Right cardiac atrium (tissue), 5 donors: ENCODE measurements at regions of chr18 and their contacts with region 1.

Region 1: DNA sequence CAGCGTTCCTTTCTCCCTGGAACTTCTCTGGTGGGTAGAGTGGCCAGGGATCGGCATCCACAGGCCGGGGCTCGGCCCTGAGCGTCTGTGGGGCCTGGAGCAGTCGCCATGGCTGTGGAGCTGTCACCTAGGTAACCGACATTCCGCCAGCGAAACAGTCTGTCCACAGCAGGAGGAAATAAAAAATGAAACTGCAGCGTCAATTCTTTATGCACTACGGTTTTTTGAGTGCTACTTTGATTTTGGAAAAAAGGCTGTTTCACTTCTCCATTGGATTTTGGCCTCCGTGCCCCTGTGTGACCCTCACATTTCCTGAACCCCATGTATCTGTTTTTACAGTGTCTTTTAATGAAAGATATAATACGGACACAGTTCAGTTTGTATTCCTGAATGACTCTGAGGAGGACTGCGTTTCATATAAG is 163.4 kb downstream of the LDLRAD4 start:
- DNase-seq: peak; percentile 78 to 90 (median 90)
- ATAC-seq: peak; percentile 87 to 90
- H3K4me3 ChIP-seq: peak overlapping the region; percentile 40
- H3K27ac ChIP-seq: peak overlapping the region; percentile 85
- H3K4me1 ChIP-seq: peaks cover 24% of the 10 kb centered on the region
- H3K27me3 ChIP-seq: no peaks in the 10 kb centered on the region

Region 2: GRCh38 chr18:13221869-13222855 is 159.8 kb before region 1 on chr18:
- intact Hi-C with region 1: loop called in 3 of 4 experiments (anchors 5 to 10 kb)
- DNase-seq: peak; percentile 83 to 94 (median 92)
- ATAC-seq: peak; percentile 74 to 83
- H3K4me3 ChIP-seq: peak overlapping the region; percentile 27
- H3K27ac ChIP-seq: peak overlapping the region; percentile 86
- H3K4me1 ChIP-seq: peaks cover 26% of the 10 kb centered on the region
- H3K27me3 ChIP-seq: no peaks in the 10 kb centered on the region

Region 3: DNA sequence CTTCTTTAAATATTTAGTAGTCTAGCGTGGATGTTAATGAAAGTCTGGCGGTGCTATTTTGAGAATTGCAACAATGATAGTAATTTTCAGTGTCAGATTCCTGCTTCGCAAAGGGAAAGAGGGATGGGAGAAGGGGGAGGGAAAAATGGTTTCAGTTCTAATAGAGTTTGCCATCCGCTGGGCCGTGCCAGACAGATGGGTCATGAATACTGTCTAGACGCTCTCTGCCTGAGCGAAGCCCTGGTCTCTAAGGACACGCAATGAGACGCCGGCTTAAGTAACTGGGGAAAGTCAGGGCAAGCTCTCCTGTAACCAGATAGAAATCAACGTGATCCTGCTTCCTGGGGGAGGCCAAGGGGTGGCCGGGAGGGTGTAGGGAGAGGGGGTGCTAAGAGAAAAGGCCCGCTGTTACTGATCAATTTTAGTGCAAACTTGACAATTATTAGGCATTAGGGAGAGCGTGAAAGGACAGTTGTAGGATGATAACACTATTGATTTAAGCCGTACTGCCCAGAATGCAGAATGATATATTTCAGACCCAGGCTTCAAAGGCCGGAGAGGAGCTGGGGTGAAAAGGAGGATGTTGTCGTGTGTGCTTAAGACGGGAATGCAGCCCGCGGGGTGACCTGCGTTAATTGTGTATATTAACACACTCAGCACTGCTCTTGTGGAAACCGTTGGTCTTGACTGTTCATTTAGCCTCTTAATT is 65.8 kb after region 1 on chr18:
- intact Hi-C with region 1: loop called in 1 of 4 experiments (anchors 10 kb)
- DNase-seq: peak; percentile 59 to 77 (median 70)
- ATAC-seq: peak; percentile 31 to 58
- H3K4me3 ChIP-seq: no peak overlapping the region
- H3K27ac ChIP-seq: no peak overlapping the region
- H3K4me1 ChIP-seq: peaks cover 14% of the 10 kb centered on the region
- H3K27me3 ChIP-seq: no peaks in the 10 kb centered on the region

Region 4: GRCh38 chr18:13494871-13495445 is 113.0 kb after region 1 on chr18:
- intact Hi-C with region 1: loop called in 1 of 4 experiments (anchors 10 kb)
- DNase-seq: no peak
- ATAC-seq: no peak
- H3K4me3 ChIP-seq: no peak overlapping the region
- H3K27ac ChIP-seq: no peak overlapping the region
- H3K4me1 ChIP-seq: peaks cover 3% of the 10 kb centered on the region
- H3K27me3 ChIP-seq: no peaks in the 10 kb centered on the region